Adrenal gland (tissue), 19 donors: ENCODE measurements at regions of chr4 and their contacts with region 1.

Region 1: DNA sequence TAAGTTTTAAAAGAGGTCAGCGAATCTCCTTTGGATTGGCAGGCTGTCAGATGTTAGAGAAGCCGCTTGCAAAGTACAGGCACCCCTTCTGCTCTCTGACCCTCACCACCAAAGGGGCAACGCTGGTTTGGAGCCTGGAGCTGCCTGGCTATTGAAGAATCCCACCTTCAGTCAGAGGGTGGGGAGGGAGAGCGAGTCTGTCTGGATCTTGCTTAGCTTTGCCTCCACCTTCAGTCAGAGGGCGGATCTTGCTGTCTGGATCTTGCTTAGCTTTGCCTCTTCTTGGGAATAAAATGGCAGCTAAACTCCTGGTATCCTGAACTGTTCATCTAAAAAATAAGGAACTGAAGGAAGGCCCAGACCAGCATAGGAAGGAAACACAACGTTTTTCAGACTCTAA is 7.3 kb downstream of the CCDC110 start:
- DNase-seq: no peak
- H3K4me3 ChIP-seq: no peak overlapping the region
- H3K27ac ChIP-seq: no peak overlapping the region
- H3K4me1 ChIP-seq: no peaks in the 10 kb centered on the region
- H3K27me3 ChIP-seq: no peaks in the 10 kb centered on the region
- CTCF ChIP-seq: no peak
- POLR2A ChIP-seq: no peak

Region 2: GRCh38 chr4:185369731-185370130 is 94.5 kb before region 1 on chr4:
- intact Hi-C with region 1: loop called in 1 of 2 experiments (anchors 5 kb)
- DNase-seq: no peak
- H3K4me3 ChIP-seq: no peak overlapping the region
- H3K27ac ChIP-seq: no peak overlapping the region
- H3K4me1 ChIP-seq: no peaks in the 10 kb centered on the region
- H3K27me3 ChIP-seq: no peaks in the 10 kb centered on the region
- CTCF ChIP-seq: no peak
- POLR2A ChIP-seq: no peak